Adrenal gland (tissue), 19 donors: ENCODE measurements at regions of chr15 and their contacts with region 1.

Region 1: DNA sequence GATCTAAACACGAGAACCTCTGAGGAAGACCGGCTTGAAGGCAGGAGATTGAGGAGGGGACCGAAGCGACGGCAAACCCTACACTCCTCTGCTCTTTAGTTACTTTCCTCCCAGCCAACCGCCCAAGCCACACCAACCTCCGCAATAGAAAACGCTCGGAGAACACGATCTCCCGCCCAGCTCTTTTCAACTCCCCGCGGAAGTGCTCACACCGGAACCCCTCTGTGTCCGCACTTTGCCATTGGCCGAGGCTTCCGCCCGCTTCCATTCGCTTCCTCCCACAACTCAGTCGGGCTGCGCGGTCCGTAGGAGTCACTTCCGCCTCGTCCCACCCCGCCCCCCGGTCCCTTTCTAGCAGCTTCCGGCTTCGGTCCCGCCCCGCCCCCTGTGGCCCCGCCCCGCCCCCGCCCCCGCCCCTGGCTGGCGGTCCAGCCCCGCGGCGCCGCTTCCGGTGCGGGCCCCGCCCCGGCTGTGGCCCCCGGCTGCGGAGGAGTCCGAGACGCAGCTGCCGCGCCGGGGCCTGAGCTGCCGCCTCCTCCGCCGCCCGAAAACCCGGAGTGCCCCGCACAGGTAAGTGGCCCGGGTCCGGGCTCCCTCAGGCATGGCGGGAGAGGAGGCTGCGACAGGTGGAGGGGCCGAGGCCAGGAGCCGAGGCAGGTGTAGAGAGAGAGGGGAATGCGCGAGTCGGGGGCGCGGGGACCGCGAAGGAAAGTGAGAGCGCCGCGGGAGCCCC is at the start of gene ARID3B:
- DNase-seq: peak; percentile 96 to 99 (median 99)
- H3K4me3 ChIP-seq: peak within 1 kb of the TSS; percentile 63 to 94 (median 84)
- H3K27ac ChIP-seq: peak within 1 kb of the TSS in 4 of 5 donors; percentile 28 to 66 (median 64)
- H3K4me1 ChIP-seq: peaks cover 6 to 31% of the 10 kb centered on the region in 2 donors
- H3K27me3 ChIP-seq: no peaks in the 10 kb centered on the region
- CTCF ChIP-seq: no peak
- POLR2A ChIP-seq: peak in 1 of 2 donors; percentile 47
- total RNA-seq, gene ARID3B: 1.0 to 7.1 (median 3.6) TPM

Region 2: DNA sequence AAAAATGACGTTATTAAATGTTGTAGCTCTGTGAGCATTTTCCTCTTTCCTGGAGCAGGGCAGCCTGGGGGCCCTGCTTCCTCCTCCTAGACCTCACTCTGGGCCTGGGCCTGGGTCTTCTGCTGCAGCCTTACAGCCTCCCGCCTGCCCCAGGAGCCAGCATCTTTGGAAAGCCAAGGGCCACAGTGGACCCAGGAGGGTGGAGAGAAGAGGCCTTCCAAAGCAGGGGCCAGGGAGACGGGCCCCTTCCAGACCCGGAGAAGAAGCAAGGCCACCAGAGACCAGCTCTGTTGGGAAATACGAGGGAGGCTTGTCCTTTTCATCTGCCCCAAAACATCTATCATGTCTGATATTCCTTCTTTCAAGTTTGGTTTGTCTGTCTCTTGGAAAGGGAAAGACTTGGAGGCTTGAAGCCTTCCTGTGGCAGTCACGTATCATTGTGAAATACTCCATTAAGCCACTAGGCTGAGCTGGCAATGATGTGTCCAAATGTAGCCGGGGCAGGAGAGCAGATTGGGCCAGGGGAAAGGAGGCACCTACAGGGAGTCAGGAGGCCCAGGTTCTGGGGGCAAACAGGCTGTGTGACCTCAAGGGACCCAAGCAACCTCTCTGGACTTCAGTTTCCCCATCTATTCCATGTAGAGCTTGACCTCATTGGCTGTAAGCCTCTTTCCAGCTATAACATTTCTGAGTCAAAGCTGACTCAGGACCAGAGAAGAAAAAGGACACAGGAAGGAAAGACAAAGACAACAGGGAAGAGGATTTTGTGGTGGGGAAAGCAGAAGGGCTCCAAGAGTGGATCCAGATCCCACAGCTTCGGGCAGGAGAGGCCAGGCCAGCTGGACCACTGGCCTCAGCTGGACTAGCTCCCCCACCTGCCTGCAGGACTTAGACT is 204.6 kb before region 1 on chr15:
- intact Hi-C with region 1: no loop called
- DNase-seq: no peak
- H3K4me3 ChIP-seq: no peak overlapping the region
- H3K27ac ChIP-seq: peak overlapping the region in 3 of 5 donors; percentile 43 to 76 (median 57)
- H3K4me1 ChIP-seq: peaks cover 0 to 6% of the 10 kb centered on the region in 2 donors
- H3K27me3 ChIP-seq: no peaks in the 10 kb centered on the region
- CTCF ChIP-seq: peak in 1 of 6 experiments; percentile 15
- POLR2A ChIP-seq: no peak

Region 3: DNA sequence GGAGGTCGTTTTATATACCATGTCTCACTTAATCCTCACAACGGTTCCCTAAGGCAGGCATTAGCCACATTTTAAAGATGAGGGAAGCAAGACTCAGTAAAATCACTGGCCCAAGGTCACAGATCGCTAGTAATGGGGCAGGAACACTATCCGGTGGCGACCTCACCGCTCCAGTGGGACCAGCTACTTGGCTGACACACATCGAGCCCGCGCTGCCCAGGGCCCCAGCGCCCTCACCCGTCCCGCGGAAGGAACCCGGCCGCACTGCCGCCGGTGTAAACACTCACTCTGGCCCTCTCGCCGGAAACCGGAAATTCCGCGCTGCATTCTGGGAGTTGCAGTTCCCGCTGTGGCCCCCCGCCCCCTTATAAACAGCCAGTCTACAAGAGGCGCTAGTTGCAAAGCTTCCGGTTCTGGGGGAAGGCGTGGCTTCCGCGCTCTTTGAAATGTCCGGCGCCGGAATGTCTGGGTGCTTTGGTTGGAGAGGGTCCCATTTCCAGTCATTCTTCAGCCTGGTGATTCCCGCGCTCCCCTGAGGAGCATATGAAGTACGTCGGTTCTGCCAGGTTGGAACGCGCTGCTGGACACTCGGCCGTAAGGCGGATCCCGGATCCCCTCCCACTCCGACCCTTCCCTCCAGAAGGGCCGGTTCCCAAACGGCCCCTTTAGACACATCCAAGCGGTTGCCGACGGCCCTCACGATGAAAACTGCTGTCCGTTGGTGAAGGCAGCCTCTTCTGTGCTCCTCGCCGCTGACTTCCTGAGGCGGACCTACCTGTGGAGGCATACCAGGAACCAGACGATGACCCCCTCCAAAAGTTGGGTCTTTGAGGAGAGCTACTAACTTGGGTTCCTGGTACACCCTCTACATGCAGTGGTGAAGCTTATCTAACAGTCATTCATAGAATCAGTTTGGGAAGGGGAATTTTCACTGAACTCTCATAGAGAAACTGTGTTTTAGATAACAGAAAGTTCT is 79.8 kb before region 1 on chr15 and contains the start of gene UBL7:
- intact Hi-C with region 1: loop called in 1 of 2 experiments (anchors 5 kb)
- DNase-seq: peak; percentile 96 to 99 (median 98)
- H3K4me3 ChIP-seq: peak within 1 kb of the TSS; percentile 45 to 64 (median 60)
- H3K27ac ChIP-seq: peak within 1 kb of the TSS in 3 of 5 donors; percentile 55 to 69 (median 55)
- H3K4me1 ChIP-seq: peaks cover 0 to 8% of the 10 kb centered on the region in 2 donors
- H3K27me3 ChIP-seq: no peaks in the 10 kb centered on the region
- CTCF ChIP-seq: no peak
- POLR2A ChIP-seq: peak; percentile 60 to 86
- total RNA-seq, gene UBL7: 47.7 to 85.0 (median 59.3) TPM

Region 4: GRCh38 chr15:74615508-74616365 is 74.8 kb after region 1 on chr15 and contains the start of gene CLK3:
- intact Hi-C with region 1: loop called in 1 of 2 experiments (anchors 10 kb)
- DNase-seq: peak; percentile 93 to 97 (median 96)
- H3K4me3 ChIP-seq: peak within 1 kb of the TSS; percentile 60 to 85 (median 70)
- H3K27ac ChIP-seq: peak within 1 kb of the TSS; percentile 75 to 100 (median 98)
- H3K4me1 ChIP-seq: peaks cover 9 to 36% of the 10 kb centered on the region in 2 donors
- H3K27me3 ChIP-seq: no peaks in the 10 kb centered on the region
- CTCF ChIP-seq: peak in 1 of 6 experiments; percentile 6
- POLR2A ChIP-seq: peak; percentile 75 to 95
- total RNA-seq, gene CLK3: 26.2 to 123 (median 58.5) TPM